B cell (primary cell): ENCODE measurements at regions of chr19 and their contacts with region 1.

Region 1: GRCh38 chr19:7535035-7535992 is at the start of gene PNPLA6:
- DNase-seq: peak; percentile 95
- ATAC-seq: peak; percentile 75
- H3K4me3 ChIP-seq: peak within 1 kb of the TSS; percentile 36 to 96 (median 91)
- H3K4me3 Mint-ChIP-seq: peak within 1 kb of the TSS; percentile 97
- H3K27ac ChIP-seq: peak within 1 kb of the TSS; percentile 59 to 83
- H3K27ac Mint-ChIP-seq: peak within 1 kb of the TSS; percentile 96
- H3K4me1 ChIP-seq: peaks cover 10 to 34% of the 10 kb centered on the region in 2 donors
- H3K4me1 Mint-ChIP-seq: peaks cover 21% of the 10 kb centered on the region
- H3K27me3 ChIP-seq: no peaks in the 10 kb centered on the region
- H3K27me3 Mint-ChIP-seq: no peaks in the 10 kb centered on the region
- CTCF ChIP-seq: no peak
- total RNA-seq, gene PNPLA6: 149 and 165 TPM in 2 replicates

Region 2: GRCh38 chr19:7488736-7489353 is 46.5 kb before region 1 on chr19 and contains the start of gene PEX11G:
- CTCF ChIA-PET with region 1: no interaction called
- POLR2A ChIA-PET with region 1: interaction called, 3 read pairs
- intact Hi-C with region 1: loop called (anchors 1 kb)
- DNase-seq: peak; percentile 93
- ATAC-seq: peak; percentile 99
- H3K4me3 ChIP-seq: peak within 1 kb of the TSS; percentile 43 to 67 (median 61)
- H3K4me3 Mint-ChIP-seq: peak within 1 kb of the TSS; percentile 90
- H3K27ac ChIP-seq: peak within 1 kb of the TSS in 1 of 2 donors; percentile 67
- H3K27ac Mint-ChIP-seq: peak within 1 kb of the TSS; percentile 81
- H3K4me1 ChIP-seq: peaks cover 5 to 14% of the 10 kb centered on the region in 2 donors
- H3K4me1 Mint-ChIP-seq: peaks cover 7% of the 10 kb centered on the region
- H3K27me3 ChIP-seq: peaks cover 0 to 3% (median 0%) of the 10 kb centered on the region in 4 experiments
- H3K27me3 Mint-ChIP-seq: no peaks in the 10 kb centered on the region
- CTCF ChIP-seq: no peak
- total RNA-seq, gene PEX11G: 0.62 and 0.68 TPM in 2 replicates

Region 3: DNA sequence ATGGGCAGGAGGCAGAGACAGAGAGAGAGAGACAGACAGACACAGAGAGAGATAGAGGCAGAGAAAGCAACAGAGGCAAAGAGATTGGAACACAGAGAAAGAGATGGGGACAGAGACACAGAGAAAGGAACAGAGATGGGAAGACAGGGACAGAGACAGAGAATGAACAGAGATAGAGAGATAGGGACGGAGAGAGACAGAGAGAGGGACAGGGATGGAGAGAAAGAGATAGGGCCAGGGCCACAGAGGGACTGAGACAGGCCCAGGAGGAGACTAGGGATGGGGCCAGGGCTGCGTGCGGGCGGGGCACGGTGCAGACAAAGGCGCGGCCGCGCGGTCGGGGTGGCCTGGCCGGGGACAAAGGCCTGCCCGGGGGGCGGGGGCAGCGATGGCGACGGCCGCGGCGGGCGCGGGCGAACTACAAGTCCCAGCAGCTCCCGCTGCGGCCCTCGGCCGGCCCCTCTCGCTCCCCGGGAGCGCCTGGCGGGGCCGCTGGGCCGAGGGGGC is 19.6 kb before region 1 on chr19 and contains the start of gene ZNF358:
- CTCF ChIA-PET with region 1: interaction called, 3 read pairs
- POLR2A ChIA-PET with region 1: interaction called, 4 read pairs
- intact Hi-C with region 1: loop called (anchors 2 kb)
- DNase-seq: peak; percentile 63
- ATAC-seq: peak; percentile 98
- H3K4me3 ChIP-seq: peak within 1 kb of the TSS in 4 of 5 experiments; percentile 31 to 57 (median 47)
- H3K4me3 Mint-ChIP-seq: peak within 1 kb of the TSS; percentile 82
- H3K27ac ChIP-seq: no peak within 1 kb of the TSS
- H3K27ac Mint-ChIP-seq: peak within 1 kb of the TSS; percentile 46
- H3K4me1 ChIP-seq: peaks cover 9 to 14% of the 10 kb centered on the region in 2 donors
- H3K4me1 Mint-ChIP-seq: peaks cover 12% of the 10 kb centered on the region
- H3K27me3 ChIP-seq: no peaks in the 10 kb centered on the region
- H3K27me3 Mint-ChIP-seq: peaks cover 11% of the 10 kb centered on the region
- CTCF ChIP-seq: no peak
- total RNA-seq, gene ZNF358: 15.1 and 17.5 TPM in 2 replicates

Region 4: DNA sequence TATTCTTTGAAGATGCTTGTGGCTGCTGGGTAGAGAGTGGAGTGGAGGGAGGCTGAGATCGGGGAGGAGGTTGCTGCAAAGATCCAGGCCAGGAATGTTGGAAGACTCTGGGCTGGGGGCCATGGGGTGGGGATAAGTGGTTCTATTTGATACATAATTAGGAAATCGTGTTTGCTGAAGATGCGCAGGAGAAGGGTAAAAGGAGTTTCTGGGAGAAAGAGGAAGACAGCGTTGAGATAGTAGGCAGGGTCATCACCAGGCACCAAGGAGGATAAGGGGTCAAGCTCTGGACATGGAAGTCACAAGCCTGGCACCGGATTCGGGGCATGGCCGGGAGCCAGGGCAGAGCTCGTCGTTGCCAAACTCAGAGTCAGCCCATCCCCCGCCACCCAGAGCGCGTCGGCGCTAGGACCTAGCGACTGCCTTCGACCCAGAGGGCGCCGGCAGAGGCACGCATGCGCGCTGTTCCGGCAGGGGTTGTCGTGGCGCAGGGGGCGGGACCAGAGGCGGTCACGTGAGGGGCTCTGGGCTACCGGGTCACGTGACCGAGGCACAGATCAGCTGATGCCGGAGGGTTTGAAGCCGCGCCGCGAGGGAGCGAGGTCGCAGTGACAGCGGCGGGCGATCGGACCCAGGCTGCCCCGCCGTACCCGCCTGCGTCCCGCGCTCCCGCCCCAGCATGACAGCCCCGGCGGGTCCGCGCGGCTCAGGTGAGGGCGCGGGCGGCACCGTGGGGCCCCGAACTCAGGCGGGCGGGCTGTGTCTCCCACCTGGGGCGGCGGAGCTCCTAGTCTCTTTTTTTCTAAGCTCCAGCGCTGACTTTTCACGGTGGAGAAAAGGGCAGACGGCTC is 13.0 kb before region 1 on chr19 and contains the start of gene MCOLN1:
- CTCF ChIA-PET with region 1: interaction called, 6 read pairs
- POLR2A ChIA-PET with region 1: interaction called, 24 read pairs
- intact Hi-C with region 1: loop called (anchors 1 kb)
- DNase-seq: peak; percentile 99
- ATAC-seq: peak; percentile 96
- H3K4me3 ChIP-seq: peak within 1 kb of the TSS; percentile 48 to 75 (median 67)
- H3K4me3 Mint-ChIP-seq: peak within 1 kb of the TSS; percentile 91
- H3K27ac ChIP-seq: peak within 1 kb of the TSS in 1 of 2 donors; percentile 55
- H3K27ac Mint-ChIP-seq: peak within 1 kb of the TSS; percentile 94
- H3K4me1 ChIP-seq: peaks cover 13 to 19% of the 10 kb centered on the region in 2 donors
- H3K4me1 Mint-ChIP-seq: peaks cover 12% of the 10 kb centered on the region
- H3K27me3 ChIP-seq: no peaks in the 10 kb centered on the region
- H3K27me3 Mint-ChIP-seq: no peaks in the 10 kb centered on the region
- CTCF ChIP-seq: no peak
- total RNA-seq, gene MCOLN1: 12.5 TPM in 2 replicates

Region 5: DNA sequence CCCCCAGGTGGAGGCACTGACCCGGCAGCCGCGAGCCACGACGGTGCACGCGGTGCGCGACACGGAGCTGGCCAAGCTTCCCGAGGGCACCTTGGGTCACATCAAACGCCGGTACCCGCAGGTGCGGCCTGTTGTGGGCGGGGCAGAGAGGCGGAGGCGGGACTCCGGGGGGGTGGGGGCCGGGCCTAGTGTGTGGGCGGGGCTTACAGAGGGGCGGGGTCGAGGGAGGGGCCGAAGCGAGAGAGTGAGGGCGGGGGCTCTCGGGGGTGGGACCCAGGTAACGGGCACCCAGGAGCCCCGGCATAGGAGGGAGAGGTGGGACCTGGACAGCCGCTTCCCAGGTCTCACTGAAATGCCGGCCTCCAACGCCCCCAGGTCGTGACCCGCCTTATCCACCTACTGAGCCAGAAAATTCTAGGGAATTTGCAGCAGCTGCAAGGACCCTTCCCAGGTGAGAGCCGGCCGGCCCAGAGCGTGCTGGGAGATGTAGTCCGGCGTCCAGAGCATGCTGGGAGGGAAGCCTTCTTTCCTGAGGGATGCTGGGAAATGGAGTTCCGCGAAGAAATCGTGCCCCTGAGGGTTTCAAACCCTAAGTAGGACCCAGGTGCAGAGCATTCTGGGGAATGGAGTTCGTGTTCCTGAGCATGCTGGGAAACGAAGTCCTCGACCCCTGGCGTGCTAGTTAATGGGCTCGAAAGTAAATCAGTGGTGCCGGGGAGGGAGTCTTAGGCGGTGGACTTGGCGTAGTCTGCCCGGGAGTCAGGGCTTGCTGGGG is 15.9 kb after region 1 on chr19:
- CTCF ChIA-PET with region 1: no interaction called
- POLR2A ChIA-PET with region 1: no interaction called
- intact Hi-C with region 1: loop called (anchors 1 kb)
- DNase-seq: peak; percentile 37
- ATAC-seq: peak; percentile 81
- H3K4me3 ChIP-seq: no peak overlapping the region
- H3K4me3 Mint-ChIP-seq: no peak overlapping the region
- H3K27ac ChIP-seq: no peak overlapping the region
- H3K27ac Mint-ChIP-seq: peak overlapping the region; percentile 15
- H3K4me1 ChIP-seq: peaks cover 0 to under 1% of the 10 kb centered on the region in 2 donors
- H3K4me1 Mint-ChIP-seq: peaks cover 3% of the 10 kb centered on the region
- H3K27me3 ChIP-seq: no peaks in the 10 kb centered on the region
- H3K27me3 Mint-ChIP-seq: no peaks in the 10 kb centered on the region
- CTCF ChIP-seq: no peak

Region 6: GRCh38 chr19:7562646-7563393 is 27.5 kb after region 1 on chr19:
- CTCF ChIA-PET with region 1: interaction called, 5 read pairs
- POLR2A ChIA-PET with region 1: no interaction called
- intact Hi-C with region 1: loop called (anchors 1 kb)
- DNase-seq: peak; percentile 19
- ATAC-seq: no peak
- H3K4me3 ChIP-seq: no peak overlapping the region
- H3K4me3 Mint-ChIP-seq: no peak overlapping the region
- H3K27ac ChIP-seq: no peak overlapping the region
- H3K27ac Mint-ChIP-seq: no peak overlapping the region
- H3K4me1 ChIP-seq: no peaks in the 10 kb centered on the region
- H3K4me1 Mint-ChIP-seq: no peaks in the 10 kb centered on the region
- H3K27me3 ChIP-seq: no peaks in the 10 kb centered on the region
- H3K27me3 Mint-ChIP-seq: no peaks in the 10 kb centered on the region
- CTCF ChIP-seq: no peak

Region 7: GRCh38 chr19:7629347-7630054 is 94.2 kb after region 1 on chr19 and contains the starts of genes PET100 and XAB2:
- CTCF ChIA-PET with region 1: no interaction called
- POLR2A ChIA-PET with region 1: no interaction called
- intact Hi-C with region 1: loop called (anchors 2 kb)
- DNase-seq: peak; percentile 99
- ATAC-seq: peak; percentile 96
- H3K4me3 ChIP-seq: peak within 1 kb of the TSS; percentile 78 to 100 (median 99)
- H3K4me3 Mint-ChIP-seq: peak within 1 kb of the TSS; percentile 92
- H3K27ac ChIP-seq: peak within 1 kb of the TSS; percentile 87 to 91
- H3K27ac Mint-ChIP-seq: peak within 1 kb of the TSS; percentile 95
- H3K4me1 ChIP-seq: peaks cover 19 to 31% of the 10 kb centered on the region in 2 donors
- H3K4me1 Mint-ChIP-seq: peaks cover 43% of the 10 kb centered on the region
- H3K27me3 ChIP-seq: no peaks in the 10 kb centered on the region
- H3K27me3 Mint-ChIP-seq: no peaks in the 10 kb centered on the region
- CTCF ChIP-seq: no peak
- total RNA-seq, gene PET100: 89.1 and 100 TPM in 2 replicates
- total RNA-seq, gene XAB2: 62.7 and 64.2 TPM in 2 replicates

Region 8: DNA sequence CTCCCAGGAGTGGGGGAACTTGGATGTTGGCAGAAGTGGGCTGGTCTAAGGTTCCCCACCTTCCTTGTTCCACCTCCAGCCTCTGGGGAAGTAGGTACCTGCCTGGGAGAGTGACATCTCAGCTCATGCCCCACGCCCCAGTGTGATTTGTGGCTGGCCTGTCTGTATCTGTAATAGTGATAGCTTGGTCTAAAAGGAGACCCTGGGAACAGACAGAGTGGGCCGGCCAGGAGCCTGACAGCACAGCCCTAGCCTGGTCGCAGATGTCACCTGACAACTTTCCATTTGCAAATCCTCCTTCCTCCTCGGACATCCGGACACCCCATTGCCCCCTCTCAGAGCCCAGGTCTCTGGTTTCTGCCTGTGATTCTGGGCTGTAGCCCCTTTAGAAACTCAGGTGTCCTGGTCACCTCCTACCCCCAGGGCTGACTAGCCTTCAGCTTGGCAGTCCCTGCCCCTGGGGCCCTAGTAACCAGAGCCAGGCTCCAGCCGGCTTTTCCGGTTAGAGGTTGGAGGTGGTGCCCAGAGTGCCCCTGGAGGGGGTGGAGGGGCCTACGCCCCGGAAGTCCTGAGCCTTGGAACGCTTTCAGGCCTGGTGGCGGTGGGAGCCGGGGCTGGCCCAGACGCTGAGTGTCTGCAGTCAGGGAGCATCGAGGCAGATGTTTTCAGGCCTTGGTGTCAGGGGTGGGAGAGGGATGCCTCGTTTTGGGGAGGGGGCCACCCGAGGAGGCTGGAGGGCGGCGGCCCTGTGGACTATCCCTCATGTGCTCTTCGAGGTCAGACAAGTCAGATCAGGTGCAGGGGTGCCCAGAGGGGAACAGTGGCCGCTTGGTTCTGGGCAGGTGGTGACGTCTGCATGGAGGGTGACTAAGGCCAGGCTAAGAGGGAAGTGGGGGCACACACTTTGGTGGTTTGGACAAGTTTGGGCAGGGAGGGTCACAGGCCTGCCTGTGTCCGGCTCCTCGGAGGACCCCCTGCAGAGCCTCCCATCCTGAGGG is 359.5 kb after region 1 on chr19:
- CTCF ChIA-PET with region 1: no interaction called
- POLR2A ChIA-PET with region 1: no interaction called
- intact Hi-C with region 1: no loop called
- DNase-seq: no peak
- ATAC-seq: no peak
- H3K4me3 ChIP-seq: no peak overlapping the region
- H3K4me3 Mint-ChIP-seq: no peak overlapping the region
- H3K27ac ChIP-seq: no peak overlapping the region
- H3K27ac Mint-ChIP-seq: no peak overlapping the region
- H3K4me1 ChIP-seq: no peaks in the 10 kb centered on the region
- H3K4me1 Mint-ChIP-seq: no peaks in the 10 kb centered on the region
- H3K27me3 ChIP-seq: peaks cover 0 to 14% (median 1%) of the 10 kb centered on the region in 4 experiments
- H3K27me3 Mint-ChIP-seq: peaks cover 21% of the 10 kb centered on the region
- CTCF ChIP-seq: no peak